AG04449 (cell line): ENCODE measurements at regions of chr1 and their contacts with region 1.

Region 1: GRCh38 chr1:86965012-86965826 is 50.8 kb downstream of the HS2ST1 start:
- DNase-seq: no peak
- H3K4me3 ChIP-seq: no peak overlapping the region
- CTCF ChIP-seq: peak; percentile 52

Region 2: DNA sequence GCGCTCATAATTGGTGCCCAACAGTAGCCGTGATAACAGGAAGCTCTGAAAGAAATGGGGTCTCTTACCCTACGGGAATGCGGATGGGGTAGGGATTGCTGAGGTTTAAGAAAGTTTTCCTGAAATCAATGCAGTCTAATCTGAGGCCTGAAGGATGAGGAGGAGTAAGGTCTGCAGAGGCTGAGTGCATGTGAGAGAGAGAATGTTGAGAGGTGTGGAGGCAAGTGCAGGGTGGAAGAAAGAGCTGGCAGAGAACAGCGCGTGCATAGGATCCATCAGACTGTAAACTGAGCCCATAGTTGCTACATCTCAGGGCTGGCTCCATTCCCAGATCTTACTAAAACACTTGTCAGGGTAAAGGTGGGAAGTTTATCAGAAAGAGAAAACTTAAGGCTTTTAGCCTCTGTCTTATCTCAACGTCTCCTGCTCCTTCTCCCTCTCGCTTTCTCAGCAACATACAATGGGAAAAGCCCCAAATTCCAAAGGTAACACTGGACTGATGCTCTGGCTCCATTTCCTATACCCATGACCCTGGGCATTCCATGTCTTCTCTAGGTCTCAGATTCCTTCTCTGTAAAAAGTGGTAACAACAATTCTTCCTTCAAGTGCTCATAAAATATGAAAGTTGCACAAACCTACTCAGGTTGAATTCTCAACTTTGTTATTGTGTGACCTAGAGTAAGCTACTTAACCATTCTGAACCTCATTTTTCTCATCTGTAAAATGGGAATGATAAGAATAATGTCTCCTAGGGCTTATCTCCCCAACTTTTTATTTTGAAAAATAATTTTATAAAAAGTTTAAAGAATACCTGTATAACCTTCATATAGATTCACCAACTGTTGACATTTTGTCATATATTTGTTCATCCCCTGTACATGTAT is 185.7 kb before region 1 on chr1:
- CTCF ChIA-PET with region 1: interaction called, 46 read pairs
- POLR2A ChIA-PET with region 1: no interaction called
- DNase-seq: no peak
- H3K4me3 ChIP-seq: no peak overlapping the region
- CTCF ChIP-seq: no peak

Region 3: GRCh38 chr1:86833461-86834215 is 131.6 kb before region 1 on chr1:
- CTCF ChIA-PET with region 1: interaction called, 92 read pairs
- POLR2A ChIA-PET with region 1: no interaction called
- DNase-seq: peak; percentile 45
- H3K4me3 ChIP-seq: no peak overlapping the region
- CTCF ChIP-seq: peak; percentile 55

Region 4: GRCh38 chr1:86942042-86942441 is 23.2 kb before region 1 on chr1:
- CTCF ChIA-PET with region 1: interaction called, 10 read pairs
- POLR2A ChIA-PET with region 1: no interaction called
- DNase-seq: no peak
- H3K4me3 ChIP-seq: no peak overlapping the region
- CTCF ChIP-seq: no peak

Region 5: DNA sequence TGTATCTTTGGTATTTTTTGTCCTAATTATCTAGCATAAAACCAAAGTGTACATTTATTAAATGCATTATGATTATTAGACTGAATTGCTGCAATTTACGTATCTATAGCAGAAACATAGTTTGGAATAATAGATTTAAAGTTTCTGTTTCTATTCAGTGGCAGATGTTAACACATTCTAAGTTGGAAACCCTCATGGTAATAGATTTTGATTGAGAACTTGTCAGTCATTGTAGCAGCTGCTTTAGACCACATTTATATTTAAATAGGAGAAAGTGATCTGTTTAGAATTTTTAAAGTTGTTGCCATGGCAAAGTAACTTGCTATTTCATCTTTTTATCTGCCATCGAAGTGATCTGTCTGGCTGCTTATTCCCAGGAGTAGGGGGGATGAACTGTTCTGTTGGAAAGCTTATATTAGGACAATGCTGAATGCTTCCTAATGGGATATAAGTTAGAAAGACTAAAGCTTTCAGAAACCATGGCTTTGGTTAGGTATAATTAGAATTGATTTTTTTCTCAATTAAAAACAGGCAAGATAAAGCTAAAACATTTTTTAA is 10.9 kb after region 1 on chr1:
- CTCF ChIA-PET with region 1: interaction called, 31 read pairs
- POLR2A ChIA-PET with region 1: no interaction called
- DNase-seq: no peak
- H3K4me3 ChIP-seq: no peak overlapping the region
- CTCF ChIP-seq: no peak

Region 6: GRCh38 chr1:87197156-87197555 is 231.9 kb after region 1 on chr1:
- CTCF ChIA-PET with region 1: no interaction called
- POLR2A ChIA-PET with region 1: no interaction called
- DNase-seq: no peak
- H3K4me3 ChIP-seq: no peak overlapping the region
- CTCF ChIP-seq: no peak

Region 7: GRCh38 chr1:87252406-87252805 is 287.2 kb after region 1 on chr1:
- CTCF ChIA-PET with region 1: no interaction called
- POLR2A ChIA-PET with region 1: no interaction called
- DNase-seq: peak; percentile 40
- H3K4me3 ChIP-seq: no peak overlapping the region
- CTCF ChIP-seq: no peak